ENCODE measurements at regions of chr6 and their contacts with region 1.

Region 1: DNA sequence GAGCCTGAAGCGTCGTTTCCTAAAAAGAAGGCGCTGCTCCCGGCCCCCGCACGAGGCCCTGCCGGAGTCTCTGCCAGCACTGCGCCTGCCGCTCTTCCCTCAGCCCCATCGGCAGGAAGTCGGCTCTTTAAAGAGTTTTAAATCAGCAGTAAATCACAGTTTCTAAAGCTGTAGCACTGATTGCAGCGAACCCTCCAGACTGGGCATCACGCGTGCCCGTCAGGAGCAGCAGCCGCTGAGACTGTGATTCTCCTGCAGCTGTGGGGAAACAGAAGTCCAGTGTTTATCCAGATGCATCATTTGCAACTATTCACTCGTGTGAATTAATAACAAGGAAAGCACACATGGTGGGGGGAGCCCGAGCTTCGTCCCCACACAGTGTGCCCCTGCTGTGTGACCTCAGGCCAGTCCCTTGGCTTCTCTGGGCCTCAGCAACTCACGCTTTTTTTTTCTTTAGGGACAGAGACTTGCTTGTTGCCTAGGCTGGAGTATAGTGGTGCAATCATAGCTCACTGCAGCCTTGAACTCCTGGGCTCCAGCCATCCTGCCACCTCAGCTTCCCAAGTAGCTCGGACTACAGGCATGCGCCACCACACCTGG is 28.3 kb downstream of the DLL1 start:
- DNase-seq: no peak
- H3K4me3 ChIP-seq: no peak overlapping the region
- H3K27ac ChIP-seq: no peak overlapping the region
- H3K27me3 ChIP-seq: peaks cover 9% of the 10 kb centered on the region
- CTCF ChIP-seq: no peak

Region 2: GRCh38 chr6:169701954-169702839 is 560.4 kb before region 1 on chr6 and contains the starts of genes C6orf120 and WDR27:
- CTCF ChIA-PET with region 1: no interaction called
- POLR2A ChIA-PET with region 1: interaction called, 15 read pairs
- DNase-seq: peak; percentile 90
- H3K4me3 ChIP-seq: peak within 1 kb of the TSS; percentile 94
- H3K27ac ChIP-seq: peak within 1 kb of the TSS; percentile 81
- H3K27me3 ChIP-seq: no peaks in the 10 kb centered on the region
- CTCF ChIP-seq: no peak
- polyA plus RNA-seq, gene C6orf120: 32.8 and 35.9 TPM in 2 replicates
- polyA plus RNA-seq, gene WDR27: 20.0 and 20.5 TPM in 2 replicates

Region 3: DNA sequence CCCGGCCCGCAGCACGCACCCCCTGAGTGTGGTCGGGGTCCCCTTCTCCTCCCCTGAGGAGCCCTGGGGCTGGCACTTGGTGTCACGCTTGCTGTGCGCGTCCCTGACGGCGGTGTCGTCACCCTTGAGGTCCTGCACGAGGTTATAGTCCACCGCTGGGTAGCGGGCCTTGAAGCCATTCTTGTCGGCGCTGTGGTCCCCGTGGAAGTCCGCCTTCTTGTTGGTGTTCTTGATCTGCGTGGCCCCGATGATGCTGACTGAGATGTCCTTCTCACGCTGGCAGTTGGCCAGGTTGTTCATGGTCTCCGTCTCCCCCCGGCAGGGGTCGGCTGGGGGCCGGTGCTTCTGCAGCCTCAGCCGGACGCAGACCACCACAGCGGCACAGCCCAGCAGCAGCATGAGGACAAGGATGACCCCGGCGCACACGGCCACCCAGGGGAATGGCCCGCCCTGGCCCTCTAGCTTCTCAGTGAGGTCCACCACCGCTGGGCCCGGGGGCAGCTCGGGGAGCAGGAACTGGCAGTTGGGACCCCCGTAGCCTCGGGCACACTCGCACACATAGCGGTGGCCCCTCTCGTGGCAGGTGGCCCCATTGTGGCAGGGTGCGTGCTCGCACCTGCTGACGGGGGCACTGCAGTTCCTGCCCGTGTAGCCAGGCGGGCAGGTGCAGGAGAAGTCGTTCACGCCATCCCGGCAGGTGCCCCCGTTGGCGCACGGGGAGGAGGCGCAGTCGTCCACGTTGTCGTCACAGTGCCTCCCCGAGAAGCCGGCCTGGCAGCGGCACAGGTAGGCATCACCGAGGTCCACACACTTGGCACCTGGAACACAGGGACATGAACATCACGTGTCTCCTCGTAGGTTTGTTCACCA is 20.9 kb after region 1 on chr6:
- CTCF ChIA-PET with region 1: no interaction called
- POLR2A ChIA-PET with region 1: no interaction called
- DNase-seq: no peak
- H3K4me3 ChIP-seq: no peak overlapping the region
- H3K27ac ChIP-seq: no peak overlapping the region
- H3K27me3 ChIP-seq: peaks cover 40% of the 10 kb centered on the region
- CTCF ChIP-seq: no peak

Region 4: GRCh38 chr6:170371588-170371987 is 109.0 kb after region 1 on chr6:
- CTCF ChIA-PET with region 1: no interaction called
- POLR2A ChIA-PET with region 1: no interaction called
- DNase-seq: no peak
- H3K4me3 ChIP-seq: no peak overlapping the region
- H3K27ac ChIP-seq: no peak overlapping the region
- H3K27me3 ChIP-seq: no peaks in the 10 kb centered on the region
- CTCF ChIP-seq: no peak